ENCODE measurements at regions of chr17 and their contacts with region 1.

Region 1: DNA sequence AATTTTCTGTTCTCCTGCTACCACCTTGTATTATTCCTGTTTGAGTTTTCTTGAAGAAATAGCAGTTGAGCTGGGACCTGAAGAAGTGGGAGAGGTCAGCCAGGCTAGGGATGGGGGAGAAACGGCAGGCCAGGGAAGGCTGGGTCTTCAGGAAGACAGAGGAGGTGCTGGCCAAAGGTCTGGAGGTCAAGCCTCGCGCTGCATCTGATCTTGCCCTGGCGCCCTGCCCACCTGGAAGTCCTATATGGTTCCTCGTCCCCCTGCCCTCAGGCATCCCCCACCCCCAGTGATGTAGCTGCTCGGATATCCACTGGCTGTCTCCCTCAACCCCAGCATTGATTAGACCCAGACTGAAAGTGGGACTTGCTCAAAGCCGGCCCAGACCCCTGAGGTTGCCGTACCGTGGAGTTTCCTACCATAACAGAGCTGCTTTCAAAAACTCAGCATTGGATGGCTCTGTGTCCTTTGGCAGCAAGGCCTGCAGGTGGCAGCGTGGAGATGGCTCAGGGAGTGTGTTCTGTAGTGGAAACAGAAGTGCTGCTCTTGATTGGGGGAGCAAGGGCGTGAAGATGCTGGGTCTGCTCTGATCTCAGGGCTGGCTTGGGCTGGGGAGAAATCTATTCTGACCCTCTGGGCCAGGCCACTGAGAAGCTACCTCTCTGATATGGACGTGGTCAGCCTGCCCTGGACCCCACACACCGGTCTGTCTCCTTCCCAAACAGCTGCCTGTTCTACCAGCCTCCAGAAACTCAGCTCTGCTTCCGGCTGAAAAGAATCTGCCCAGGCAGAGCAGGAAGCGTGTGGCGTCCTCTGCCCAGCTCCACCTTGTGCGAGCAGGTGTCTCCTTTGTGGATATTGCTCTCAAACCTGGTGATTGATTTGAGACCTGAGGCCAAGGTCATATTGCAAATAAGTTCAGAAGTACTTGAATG is 107.0 kb upstream of the CACNG5 start:
- DNase-seq: no peak
- ATAC-seq: no peak
- H3K4me3 ChIP-seq: no peak overlapping the region
- H3K27ac ChIP-seq: no peak overlapping the region
- H3K4me1 ChIP-seq: peaks cover 6 to 14% of the 10 kb centered on the region in 2 donors
- H3K27me3 ChIP-seq: no peaks in the 10 kb centered on the region
- CTCF ChIP-seq: peak in 4 of 5 experiments; percentile 17 to 49 (median 36)
- POLR2A ChIP-seq: no peak

Region 2: GRCh38 chr17:66655861-66656260 is 72.0 kb before region 1 on chr17:
- in situ Hi-C with region 1: no loop called
- intact Hi-C with region 1: no loop called
- DNase-seq: no peak
- ATAC-seq: no peak
- H3K4me3 ChIP-seq: no peak overlapping the region
- H3K27ac ChIP-seq: no peak overlapping the region
- H3K4me1 ChIP-seq: no peaks in the 10 kb centered on the region
- H3K27me3 ChIP-seq: no peaks in the 10 kb centered on the region
- CTCF ChIP-seq: no peak
- POLR2A ChIP-seq: no peak

Region 3: GRCh38 chr17:67139784-67140657 is 412.1 kb after region 1 on chr17:
- in situ Hi-C with region 1: loop called in 2 of 4 experiments (anchors 25 kb)
- intact Hi-C with region 1: no loop called
- DNase-seq: no peak
- ATAC-seq: no peak
- H3K4me3 ChIP-seq: no peak overlapping the region
- H3K27ac ChIP-seq: no peak overlapping the region
- H3K4me1 ChIP-seq: no peaks in the 10 kb centered on the region
- H3K27me3 ChIP-seq: no peaks in the 10 kb centered on the region
- CTCF ChIP-seq: no peak
- POLR2A ChIP-seq: no peak